ENCODE measurements at regions of chr9 and their contacts with region 1.

Region 1: DNA sequence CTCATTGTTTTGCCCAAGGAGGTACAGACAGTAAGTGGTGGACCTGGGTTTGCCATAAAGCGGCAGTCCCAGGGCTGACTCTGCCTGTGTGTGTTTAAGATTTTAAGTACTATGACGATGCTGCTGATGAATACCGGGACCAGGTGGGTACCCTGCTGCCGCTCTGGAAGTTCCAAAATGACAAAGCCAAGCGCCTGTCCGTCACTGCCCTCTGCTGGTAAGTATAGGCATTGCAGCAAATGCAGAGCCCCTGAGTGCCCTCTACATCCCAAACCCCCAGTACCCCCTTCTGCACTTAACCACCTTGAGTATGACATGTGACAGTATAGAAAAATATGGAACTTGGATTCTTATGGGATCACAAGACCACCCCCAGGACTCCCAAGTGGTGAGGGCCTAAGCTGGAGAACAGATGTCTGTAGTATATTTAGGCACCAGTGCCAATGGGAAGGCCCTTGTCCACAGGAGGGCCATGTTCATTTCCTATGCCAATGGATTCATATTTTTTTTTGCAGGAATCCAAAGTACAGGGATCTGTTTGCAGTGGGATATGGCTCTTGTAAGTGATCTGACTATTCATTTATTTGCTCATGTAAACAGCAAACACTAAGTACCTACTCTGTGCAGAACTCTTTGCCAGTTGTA is 22.0 kb downstream of the ENHO start:
- DNase-seq: peak; percentile 79
- H3K4me3 ChIP-seq: no peak overlapping the region
- H3K27ac ChIP-seq: no peak overlapping the region
- H3K4me1 ChIP-seq: peaks cover 0 to 6% of the 10 kb centered on the region in 2 experiments; a peak in 1 of 4 replicates
- H3K27me3 ChIP-seq: no peaks in the 10 kb centered on the region
- CTCF ChIP-seq: peak; percentile 97
- EP300 ChIP-seq: no peak
- RAD21 ChIP-seq: peak; percentile 93

Region 2: GRCh38 chr9:33893861-33894260 is 606.9 kb before region 1 on chr9:
- CTCF ChIA-PET with region 1: no interaction called
- POLR2A ChIA-PET with region 1: no interaction called
- DNase-seq: no peak
- H3K4me3 ChIP-seq: no peak overlapping the region
- H3K27ac ChIP-seq: no peak overlapping the region
- H3K4me1 ChIP-seq: no peaks in the 10 kb centered on the region
- H3K27me3 ChIP-seq: no peaks in the 10 kb centered on the region
- CTCF ChIP-seq: no peak
- EP300 ChIP-seq: no peak
- RAD21 ChIP-seq: no peak

Region 3: DNA sequence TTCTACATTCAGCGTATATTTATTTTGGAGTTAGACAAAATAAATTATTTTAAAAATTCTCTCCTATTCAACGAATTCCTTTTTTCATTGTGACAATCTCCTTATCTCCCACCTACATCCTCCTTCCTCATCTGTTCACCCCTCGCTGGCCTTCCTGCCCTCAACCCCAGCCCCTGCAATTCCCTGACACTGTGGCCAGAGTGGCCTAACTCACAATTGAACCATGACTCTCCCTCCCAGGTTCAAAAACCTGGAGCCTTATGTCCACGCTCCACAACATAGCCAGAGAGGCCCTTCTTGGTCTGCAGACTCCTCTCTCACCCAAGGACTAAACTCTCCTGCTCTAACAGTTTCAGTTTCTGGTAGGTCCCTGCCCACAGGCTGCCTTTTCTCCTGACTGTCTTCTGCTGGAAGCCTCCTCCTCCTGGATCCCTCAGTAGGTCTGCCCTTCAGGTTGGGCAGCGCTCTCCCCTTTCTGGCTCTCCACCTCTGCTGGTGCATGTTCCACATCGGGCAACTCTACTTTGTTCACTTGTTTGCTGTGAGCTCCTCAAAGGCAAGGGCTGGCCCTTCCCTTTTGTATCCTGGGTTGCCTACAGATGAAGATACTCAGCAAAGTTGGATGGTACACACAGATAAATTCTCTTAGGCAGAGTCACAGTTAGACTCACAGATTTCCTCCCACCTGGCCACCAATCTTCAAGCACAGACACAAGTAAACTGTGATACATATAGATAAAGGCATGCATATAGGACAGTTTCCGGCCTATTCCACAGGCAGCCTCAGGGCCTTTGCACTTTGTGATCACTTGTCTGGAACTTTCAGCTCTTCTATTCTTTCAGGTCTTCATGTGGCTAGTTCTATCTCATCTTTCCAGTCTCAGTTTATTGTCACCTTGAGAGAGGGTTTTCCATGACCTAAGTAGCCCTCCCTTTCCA is 104.2 kb before region 1 on chr9:
- CTCF ChIA-PET with region 1: interaction called, 14 read pairs
- POLR2A ChIA-PET with region 1: no interaction called
- DNase-seq: no peak
- H3K4me3 ChIP-seq: no peak overlapping the region
- H3K27ac ChIP-seq: no peak overlapping the region
- H3K4me1 ChIP-seq: no peaks in the 10 kb centered on the region
- H3K27me3 ChIP-seq: no peaks in the 10 kb centered on the region
- CTCF ChIP-seq: no peak
- EP300 ChIP-seq: no peak
- RAD21 ChIP-seq: no peak

Region 4: DNA sequence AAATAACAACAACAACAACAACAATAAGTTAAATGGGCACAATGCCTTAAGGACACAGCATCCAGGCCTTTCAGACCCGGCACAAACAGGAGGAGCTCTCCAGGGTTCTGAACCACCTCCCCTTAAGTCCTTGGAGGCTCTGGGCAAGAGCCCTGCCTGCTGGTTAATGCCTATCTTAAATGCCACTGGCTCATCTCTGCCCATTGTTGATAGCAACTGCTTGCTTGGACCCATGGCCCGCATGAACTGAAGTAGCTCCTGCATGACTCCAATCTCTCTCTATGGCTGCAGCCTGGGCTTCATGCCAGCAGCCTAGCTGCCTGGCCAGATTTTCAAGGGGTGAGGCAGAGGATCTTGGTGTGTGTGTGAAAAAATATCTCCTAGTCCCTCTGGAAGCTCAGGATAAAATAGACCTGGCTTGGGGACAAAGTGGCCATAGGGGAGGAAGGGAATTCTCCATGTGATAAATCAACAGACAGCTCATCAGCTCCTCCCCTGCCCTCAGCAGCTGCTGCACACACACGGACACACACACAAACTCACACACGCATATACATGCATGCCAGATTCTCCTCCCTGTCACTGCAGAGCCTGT is 69.8 kb before region 1 on chr9:
- CTCF ChIA-PET with region 1: interaction called, 114 read pairs
- POLR2A ChIA-PET with region 1: no interaction called
- DNase-seq: peak; percentile 79
- H3K4me3 ChIP-seq: no peak overlapping the region
- H3K27ac ChIP-seq: peak overlapping the region in 1 of 2 experiments; percentile 78; a peak in 2 of 4 replicates
- H3K4me1 ChIP-seq: peaks cover 4 to 63% of the 10 kb centered on the region in 2 experiments; a peak in 3 of 4 replicates
- H3K27me3 ChIP-seq: no peaks in the 10 kb centered on the region
- CTCF ChIP-seq: no peak
- EP300 ChIP-seq: peak in 1 of 2 experiments; percentile 71; a peak in 1 of 4 replicates
- RAD21 ChIP-seq: peak; percentile 21; the same call in 1 of the 2 replicates

Region 5: GRCh38 chr9:34446468-34446891 is 54.3 kb before region 1 on chr9:
- CTCF ChIA-PET with region 1: interaction called, 27 read pairs
- POLR2A ChIA-PET with region 1: no interaction called
- DNase-seq: no peak
- H3K4me3 ChIP-seq: no peak overlapping the region
- H3K27ac ChIP-seq: no peak overlapping the region
- H3K4me1 ChIP-seq: peaks cover 9 to 15% of the 10 kb centered on the region in 2 experiments; a peak in 2 of 4 replicates
- H3K27me3 ChIP-seq: no peaks in the 10 kb centered on the region
- CTCF ChIP-seq: no peak
- EP300 ChIP-seq: no peak
- RAD21 ChIP-seq: no peak

Region 6: GRCh38 chr9:34463098-34463900 is 37.4 kb before region 1 on chr9:
- CTCF ChIA-PET with region 1: interaction called, 19 read pairs
- POLR2A ChIA-PET with region 1: no interaction called
- DNase-seq: peak; percentile 52
- H3K4me3 ChIP-seq: 0 out of 4 replicates have a peak overlapping the region, but pooled peaks of 1 of the 2 experiments have one; percentile 1
- H3K27ac ChIP-seq: peak overlapping the region; percentile 7 to 60; a peak in 3 of 4 replicates
- H3K4me1 ChIP-seq: peaks cover 7 to 23% of the 10 kb centered on the region in 2 experiments; a peak in 3 of 4 replicates
- H3K27me3 ChIP-seq: no peaks in the 10 kb centered on the region
- CTCF ChIP-seq: no peak
- EP300 ChIP-seq: peak; percentile 22 to 40; a peak in 2 of 4 replicates
- RAD21 ChIP-seq: no peak

Region 7: DNA sequence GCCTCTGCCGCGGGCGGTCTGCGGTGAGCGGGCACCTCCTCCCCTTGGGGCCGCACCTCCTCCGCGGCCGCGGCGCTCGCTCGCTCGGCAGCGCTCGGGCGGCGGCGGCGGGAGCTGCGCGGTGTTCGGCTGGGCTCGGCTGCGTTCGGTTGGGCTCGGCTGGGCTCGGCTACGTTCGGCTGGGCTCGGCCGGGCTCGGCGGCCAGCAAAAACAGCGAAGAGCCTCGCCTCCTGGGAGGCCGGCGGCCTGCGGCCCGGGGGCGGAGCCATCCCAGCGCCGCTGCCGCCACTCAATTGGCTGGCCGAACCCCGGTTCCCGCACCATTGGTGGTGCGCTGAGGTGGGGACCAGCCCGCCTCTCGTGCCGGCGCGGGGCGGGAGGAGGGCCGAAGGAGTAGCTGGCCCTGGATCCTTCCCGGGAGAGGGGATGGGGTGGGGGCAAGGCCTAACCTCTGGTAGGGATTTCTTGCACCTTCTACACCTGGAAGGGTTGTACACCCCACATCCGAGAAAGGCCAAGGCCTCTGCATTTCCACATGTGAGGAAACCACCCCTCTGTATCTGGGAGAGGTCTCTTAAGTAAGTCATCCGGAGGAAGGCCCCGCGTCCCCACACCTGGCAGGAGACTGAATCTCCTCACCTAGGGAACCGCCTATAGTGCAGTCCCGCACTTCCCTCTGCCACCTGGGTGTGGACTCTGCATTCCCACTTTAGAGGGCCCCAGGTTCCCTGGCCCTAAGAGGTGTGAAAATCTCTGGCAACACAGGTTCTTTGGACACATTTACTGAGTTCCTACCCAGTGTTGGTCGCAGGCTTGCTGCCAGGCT is 22.4 kb after region 1 on chr9 and contains the start of gene ENHO:
- CTCF ChIA-PET with region 1: interaction called, 16 read pairs
- POLR2A ChIA-PET with region 1: no interaction called
- DNase-seq: peak; percentile 99
- H3K4me3 ChIP-seq: peak within 1 kb of the TSS; percentile 50 to 53
- H3K27ac ChIP-seq: peak within 1 kb of the TSS in 1 of 2 experiments; percentile 36; a peak in 1 of 4 replicates
- H3K4me1 ChIP-seq: peaks cover 0 to 15% of the 10 kb centered on the region in 2 experiments; a peak in 1 of 4 replicates
- H3K27me3 ChIP-seq: no peaks in the 10 kb centered on the region
- CTCF ChIP-seq: no peak
- EP300 ChIP-seq: no peak
- RAD21 ChIP-seq: no peak
- polyA plus RNA-seq, gene ENHO: 1.2 and 1.5 TPM in 2 replicates

Measured in SK-N-SH (cell line).